IMR-90 (cell line): ENCODE measurements at regions of chr16 and their contacts with region 1.

Region 1: GRCh38 chr16:89972244-89973234 is 24.0 kb downstream of the DEF8 start:
- DNase-seq: peak; percentile 85
- ATAC-seq: peak; percentile 96
- H3K4me3 ChIP-seq: peak overlapping the region; percentile 69
- H3K27ac ChIP-seq: peak overlapping the region; percentile 86
- H3K4me1 ChIP-seq: peaks cover 9% of the 10 kb centered on the region
- H3K27me3 ChIP-seq: no peaks in the 10 kb centered on the region
- CTCF ChIP-seq: no peak
- POLR2A ChIP-seq: peak; percentile 89
- RAD21 ChIP-seq: no peak

Region 2: GRCh38 chr16:89670496-89671431 is 301.8 kb before region 1 on chr16:
- CTCF ChIA-PET with region 1: no interaction called
- POLR2A ChIA-PET with region 1: no interaction called
- dilution Hi-C with region 1: no loop called
- in situ Hi-C with region 1: no loop called
- intact Hi-C with region 1: no loop called
- DNase-seq: peak; percentile 57
- ATAC-seq: peak; percentile 80
- H3K4me3 ChIP-seq: no peak overlapping the region
- H3K27ac ChIP-seq: no peak overlapping the region
- H3K4me1 ChIP-seq: peaks cover 6% of the 10 kb centered on the region
- H3K27me3 ChIP-seq: no peaks in the 10 kb centered on the region
- CTCF ChIP-seq: no peak
- POLR2A ChIP-seq: no peak
- RAD21 ChIP-seq: no peak

Region 3: DNA sequence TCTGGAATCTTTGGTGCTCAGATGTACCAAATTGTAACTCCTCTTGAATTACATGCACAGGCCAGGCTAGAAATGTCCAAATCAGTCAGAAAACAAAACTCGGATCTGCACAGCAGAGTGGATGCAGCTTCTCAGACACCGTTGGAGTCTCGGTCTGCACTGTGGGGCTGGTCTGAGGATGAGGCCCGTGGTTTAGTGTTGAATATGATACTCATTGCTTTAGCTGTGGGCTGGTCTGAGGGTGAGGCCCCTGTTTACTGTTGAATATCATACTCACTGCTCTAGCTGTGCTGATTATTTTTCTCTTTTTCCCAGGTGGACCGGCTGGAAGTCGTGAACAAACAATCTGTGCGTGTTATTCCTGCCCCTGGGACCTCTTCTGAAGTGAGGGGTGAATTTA is 11.7 kb after region 1 on chr16:
- CTCF ChIA-PET with region 1: no interaction called
- POLR2A ChIA-PET with region 1: interaction called, 27 read pairs
- dilution Hi-C with region 1: no loop called
- in situ Hi-C with region 1: no loop called
- intact Hi-C with region 1: no loop called
- DNase-seq: no peak
- ATAC-seq: no peak
- H3K4me3 ChIP-seq: no peak overlapping the region
- H3K27ac ChIP-seq: no peak overlapping the region
- H3K4me1 ChIP-seq: no peaks in the 10 kb centered on the region
- H3K27me3 ChIP-seq: no peaks in the 10 kb centered on the region
- CTCF ChIP-seq: no peak
- POLR2A ChIP-seq: no peak
- RAD21 ChIP-seq: no peak

Region 4: GRCh38 chr16:89994389-89994720 is 21.8 kb after region 1 on chr16:
- CTCF ChIA-PET with region 1: no interaction called
- POLR2A ChIA-PET with region 1: no interaction called
- dilution Hi-C with region 1: no loop called
- in situ Hi-C with region 1: no loop called
- intact Hi-C with region 1: no loop called
- DNase-seq: no peak
- ATAC-seq: no peak
- H3K4me3 ChIP-seq: no peak overlapping the region
- H3K27ac ChIP-seq: peak overlapping the region; percentile 83; the same call in 1 of the 2 replicates
- H3K4me1 ChIP-seq: no peaks in the 10 kb centered on the region
- H3K27me3 ChIP-seq: no peaks in the 10 kb centered on the region
- CTCF ChIP-seq: no peak
- POLR2A ChIP-seq: no peak
- RAD21 ChIP-seq: no peak

Region 5: DNA sequence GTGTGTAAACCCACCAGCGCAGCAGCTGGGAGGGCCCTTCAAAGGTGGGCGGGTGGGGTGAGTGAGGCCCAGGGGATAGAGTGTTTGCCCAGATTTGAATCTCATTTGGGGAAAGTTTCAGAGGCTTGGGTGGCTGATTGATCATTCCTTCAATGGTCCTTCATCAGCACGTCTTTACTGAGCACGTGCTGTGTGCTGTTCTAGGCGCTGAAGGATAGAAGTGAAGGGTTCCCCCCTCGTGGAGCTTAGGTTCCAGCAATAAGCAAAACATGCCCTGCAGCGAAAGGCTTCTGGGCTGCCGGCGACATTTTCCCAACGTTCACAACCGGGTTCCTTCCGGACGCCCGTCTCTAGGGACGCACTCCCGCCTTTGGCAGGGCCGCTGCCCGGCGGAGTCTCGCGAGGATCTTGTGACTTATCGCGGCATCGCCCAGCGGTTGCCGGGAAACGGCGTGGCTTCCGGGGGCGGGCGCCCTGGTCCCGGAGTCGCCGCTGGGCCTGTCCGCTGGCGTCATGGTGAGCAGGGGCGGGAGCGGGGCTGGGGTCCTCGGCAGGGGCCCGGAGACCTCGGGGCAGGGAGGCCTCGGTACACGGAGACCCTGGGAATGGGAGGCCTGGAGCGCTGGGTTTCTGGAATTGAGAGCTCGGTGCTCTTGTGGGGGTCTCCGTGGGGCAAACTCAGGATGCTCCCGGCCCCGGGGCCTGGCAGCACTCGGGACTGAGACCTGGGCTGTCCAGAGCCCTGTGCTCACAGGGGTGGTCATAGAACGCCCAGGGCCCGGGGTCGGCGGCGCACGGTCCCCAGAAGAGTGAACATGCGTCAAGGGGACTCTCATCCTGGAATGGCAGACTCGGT is 49.9 kb after region 1 on chr16:
- CTCF ChIA-PET with region 1: no interaction called
- POLR2A ChIA-PET with region 1: no interaction called
- dilution Hi-C with region 1: no loop called
- in situ Hi-C with region 1: loop called (anchors 5 kb)
- intact Hi-C with region 1: loop called (anchors 2 kb)
- DNase-seq: peak; percentile 82
- ATAC-seq: peak; percentile 76
- H3K4me3 ChIP-seq: peak overlapping the region; percentile 53
- H3K27ac ChIP-seq: peak overlapping the region; percentile 78
- H3K4me1 ChIP-seq: peaks cover 10% of the 10 kb centered on the region
- H3K27me3 ChIP-seq: no peaks in the 10 kb centered on the region
- CTCF ChIP-seq: no peak
- POLR2A ChIP-seq: no peak
- RAD21 ChIP-seq: no peak